ENCODE measurements at regions of chr19 and their contacts with region 1.

Region 1: DNA sequence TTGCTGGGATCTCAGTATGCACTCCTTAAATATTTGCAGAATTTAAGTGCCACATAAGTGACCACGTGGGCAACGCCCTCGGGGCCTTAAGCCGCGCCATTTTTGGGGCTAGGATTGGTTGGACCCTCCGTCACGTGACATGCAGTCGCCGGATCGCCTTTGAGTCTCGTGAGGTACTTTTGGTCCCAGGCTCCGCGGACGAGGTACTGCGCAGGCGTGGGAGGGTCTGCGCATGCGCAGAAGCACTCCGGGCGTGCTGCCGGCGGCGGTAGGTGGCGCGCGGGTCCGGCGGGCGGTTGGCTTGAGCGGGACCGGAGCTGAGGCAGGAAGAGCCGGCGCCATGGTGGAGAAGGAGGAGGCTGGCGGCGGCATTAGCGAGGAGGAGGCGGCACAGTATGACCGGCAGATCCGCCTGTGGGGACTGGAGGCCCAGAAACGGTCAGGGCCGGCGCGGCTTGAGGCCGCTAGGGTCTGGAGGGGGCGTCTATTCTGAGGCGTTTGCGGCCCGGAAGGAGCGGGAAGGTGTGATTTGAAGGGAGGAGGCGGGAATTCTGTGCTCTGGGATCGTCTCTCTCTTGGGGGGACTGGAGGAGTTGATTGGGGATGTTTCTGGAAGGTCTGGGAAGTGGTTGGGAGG is at the start of gene SAE1:
- DNase-seq: peak; percentile 94
- H3K4me3 Mint-ChIP-seq: peak within 1 kb of the TSS; percentile 97
- H3K27ac Mint-ChIP-seq: peak within 1 kb of the TSS; percentile 90
- H3K4me1 Mint-ChIP-seq: peaks cover 47% of the 10 kb centered on the region
- H3K27me3 Mint-ChIP-seq: no peaks in the 10 kb centered on the region
- total RNA-seq, gene SAE1: 150 TPM

Region 2: DNA sequence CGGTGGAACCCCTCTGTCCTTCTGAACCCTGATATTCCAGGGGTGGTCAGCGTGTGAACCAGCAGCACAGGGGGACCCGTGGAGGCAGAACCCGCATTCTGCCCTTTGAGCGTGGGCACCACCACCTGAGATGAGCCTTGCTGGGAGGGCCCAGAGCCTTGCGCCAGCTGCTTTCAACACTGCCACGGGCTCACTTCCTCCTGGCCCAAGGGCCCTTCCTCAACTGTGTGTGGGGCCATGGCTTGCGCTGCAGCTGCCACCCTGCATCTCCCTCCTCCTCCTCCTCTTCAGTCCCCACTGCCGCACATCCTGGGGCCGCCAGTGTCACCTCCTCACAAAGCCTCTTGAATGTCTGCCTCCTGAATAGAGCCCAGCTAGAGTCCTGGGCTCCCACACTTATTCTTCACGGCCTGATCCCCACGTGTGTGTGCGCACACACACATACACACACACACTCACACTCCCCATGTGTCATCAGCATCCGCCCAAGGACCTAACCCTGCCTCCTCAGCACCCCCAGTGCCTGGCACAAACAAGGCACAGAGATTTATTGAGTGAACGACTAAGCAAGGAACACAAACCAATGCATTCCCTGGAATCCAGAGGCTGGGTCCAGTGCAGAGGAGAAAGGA is 55.4 kb before region 1 on chr19:
- CTCF ChIA-PET with region 1: interaction called, 41 read pairs
- POLR2A ChIA-PET with region 1: interaction called, 7 read pairs
- DNase-seq: no peak
- H3K4me3 Mint-ChIP-seq: no peak overlapping the region
- H3K27ac Mint-ChIP-seq: peak overlapping the region; percentile 40
- H3K4me1 Mint-ChIP-seq: peaks cover 11% of the 10 kb centered on the region
- H3K27me3 Mint-ChIP-seq: no peaks in the 10 kb centered on the region

Region 3: DNA sequence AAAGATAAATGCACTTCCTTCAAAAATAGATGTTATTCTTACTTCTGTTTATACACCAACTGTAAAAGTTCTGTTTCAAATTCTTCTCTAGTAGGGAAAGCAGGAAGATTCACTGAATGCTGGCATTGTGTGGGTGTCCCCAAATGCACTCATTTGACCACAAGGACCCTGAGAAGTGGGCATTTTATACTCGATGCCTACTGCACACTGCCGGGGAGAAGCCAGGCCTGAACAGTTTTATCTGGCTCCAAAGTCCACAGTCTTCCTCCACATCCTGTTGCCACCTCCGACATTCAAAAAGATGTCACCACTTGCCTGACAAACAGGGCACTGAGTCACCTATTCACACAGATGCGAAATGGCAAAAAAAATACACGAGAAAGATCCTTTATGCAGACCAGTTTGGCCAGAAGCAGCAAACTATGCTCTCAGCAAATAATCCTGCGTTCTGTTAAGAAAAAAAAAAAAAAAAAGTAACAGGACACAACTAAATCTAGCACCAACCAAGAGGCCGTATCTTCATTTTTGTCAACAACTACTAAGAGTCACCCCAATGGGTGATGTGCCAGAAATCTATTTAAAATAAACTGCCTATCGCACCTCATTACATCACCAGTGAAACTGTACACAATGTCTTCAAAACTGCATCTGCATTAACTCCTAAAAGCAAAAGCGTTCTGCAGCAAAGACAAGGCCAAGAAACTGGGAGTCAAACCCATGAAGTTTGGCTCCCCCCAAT is 23.3 kb before region 1 on chr19:
- CTCF ChIA-PET with region 1: interaction called, 4 read pairs
- POLR2A ChIA-PET with region 1: interaction called, 88 read pairs
- DNase-seq: peak; percentile 65
- H3K4me3 Mint-ChIP-seq: peak overlapping the region; percentile 38
- H3K27ac Mint-ChIP-seq: peak overlapping the region; percentile 100
- H3K4me1 Mint-ChIP-seq: peaks cover 62% of the 10 kb centered on the region
- H3K27me3 Mint-ChIP-seq: no peaks in the 10 kb centered on the region

Region 4: DNA sequence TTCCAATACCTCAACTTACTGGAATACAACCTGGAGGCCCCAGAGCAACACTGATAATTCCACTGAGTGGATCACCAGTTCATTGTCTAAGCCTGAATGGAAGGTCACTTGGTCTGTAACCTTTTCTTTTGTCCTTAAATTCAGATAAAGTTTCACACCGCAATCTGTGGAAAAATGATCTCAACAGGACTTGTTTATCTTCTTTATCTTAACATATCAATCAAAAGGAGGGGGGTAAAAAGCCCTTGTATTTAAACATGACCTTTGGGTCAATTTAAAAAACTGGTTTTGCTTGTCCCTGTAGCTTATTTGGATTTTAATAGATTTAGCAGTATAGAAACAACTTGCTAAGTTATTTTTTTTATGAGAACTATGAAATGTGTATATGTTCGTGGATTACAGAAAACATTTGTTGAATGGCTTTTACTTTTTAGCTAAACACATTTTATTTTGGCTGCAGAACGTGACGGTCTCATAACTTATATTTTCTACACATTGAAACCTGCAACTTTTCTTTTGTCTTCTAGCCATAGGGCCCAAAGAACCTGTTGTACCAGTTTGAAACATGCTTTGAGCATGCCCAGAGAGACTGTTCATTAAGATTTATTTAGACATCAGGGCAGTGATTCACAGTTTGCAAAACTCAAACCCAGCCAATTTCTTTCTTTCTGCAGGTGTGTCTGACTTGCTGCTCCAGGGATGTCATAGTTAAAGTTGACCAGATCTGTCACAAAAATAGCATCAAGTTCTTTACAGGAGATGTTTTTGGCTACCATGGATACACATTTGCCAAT is 21.7 kb after region 1 on chr19:
- CTCF ChIA-PET with region 1: interaction called, 15 read pairs
- POLR2A ChIA-PET with region 1: interaction called, 20 read pairs
- DNase-seq: no peak
- H3K4me3 Mint-ChIP-seq: no peak overlapping the region
- H3K27ac Mint-ChIP-seq: no peak overlapping the region
- H3K4me1 Mint-ChIP-seq: peaks cover 45% of the 10 kb centered on the region
- H3K27me3 Mint-ChIP-seq: no peaks in the 10 kb centered on the region

Region 5: DNA sequence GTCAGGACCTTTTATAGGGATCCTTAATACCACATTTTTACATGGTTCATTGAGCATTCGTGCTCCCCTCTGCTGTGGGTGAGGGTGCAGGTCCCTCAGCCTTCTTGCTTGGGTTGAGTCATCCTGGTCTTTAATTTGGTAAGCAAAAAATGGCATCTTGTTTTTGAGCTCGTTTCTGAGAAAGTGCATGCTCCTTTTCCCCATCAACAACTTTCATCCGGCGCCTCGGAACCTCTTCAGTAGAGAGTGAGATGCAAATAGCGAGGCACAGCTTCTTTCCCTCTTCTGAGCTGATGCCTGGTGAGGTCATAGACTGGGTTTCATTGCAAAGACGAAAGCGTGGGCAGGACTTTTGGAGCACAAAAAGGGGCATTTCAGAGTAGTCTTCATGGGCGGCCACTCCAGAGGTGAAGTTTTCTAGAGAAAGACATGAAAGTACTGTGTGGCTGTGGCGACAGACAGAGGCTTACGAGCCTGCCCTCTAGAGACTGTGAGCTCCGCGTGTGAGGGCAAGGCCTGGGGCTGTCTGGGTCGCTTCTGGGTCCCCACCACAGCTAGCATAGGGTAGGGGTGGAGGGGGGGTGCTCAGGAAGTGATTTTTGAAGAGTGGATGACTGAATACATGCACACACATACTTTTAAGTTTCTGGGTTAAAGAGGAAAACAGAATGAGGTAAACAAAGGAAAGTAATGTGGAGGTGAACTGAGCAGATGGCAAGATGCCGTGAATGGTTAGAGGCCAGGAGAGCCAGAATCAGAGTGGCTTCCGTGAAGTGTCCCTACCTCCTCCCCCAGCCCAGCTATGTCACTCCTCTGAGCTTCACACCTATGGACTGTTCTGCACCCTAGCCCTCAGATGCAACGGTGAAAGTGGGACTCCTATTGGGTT is 56.0 kb after region 1 on chr19:
- CTCF ChIA-PET with region 1: interaction called, 6 read pairs
- POLR2A ChIA-PET with region 1: interaction called, 15 read pairs
- DNase-seq: peak; percentile 77
- H3K4me3 Mint-ChIP-seq: peak overlapping the region; percentile 28
- H3K27ac Mint-ChIP-seq: peak overlapping the region; percentile 90
- H3K4me1 Mint-ChIP-seq: peaks cover 79% of the 10 kb centered on the region
- H3K27me3 Mint-ChIP-seq: no peaks in the 10 kb centered on the region

Region 6: GRCh38 chr19:47225746-47226425 is 95.2 kb after region 1 on chr19:
- CTCF ChIA-PET with region 1: interaction called, 8 read pairs
- POLR2A ChIA-PET with region 1: interaction called, 18 read pairs
- DNase-seq: peak; percentile 88
- H3K4me3 Mint-ChIP-seq: peak overlapping the region; percentile 79
- H3K27ac Mint-ChIP-seq: peak overlapping the region; percentile 89
- H3K4me1 Mint-ChIP-seq: peaks cover 18% of the 10 kb centered on the region
- H3K27me3 Mint-ChIP-seq: no peaks in the 10 kb centered on the region

Region 7: GRCh38 chr19:47494729-47495128 is 364.0 kb after region 1 on chr19:
- CTCF ChIA-PET with region 1: no interaction called
- POLR2A ChIA-PET with region 1: no interaction called
- DNase-seq: no peak
- H3K4me3 Mint-ChIP-seq: no peak overlapping the region
- H3K27ac Mint-ChIP-seq: no peak overlapping the region
- H3K4me1 Mint-ChIP-seq: no peaks in the 10 kb centered on the region
- H3K27me3 Mint-ChIP-seq: no peaks in the 10 kb centered on the region

Measured in activated CD4-positive, alpha-beta memory T cell treated with anti-CD3 and anti-CD28 coated beads, Interleukin-2, amount 10 ng/mL, durations not matched to agents 7 days and 5 days (primary cell).